Spleen (tissue), 13 donors: ENCODE measurements at regions of chr12 and their contacts with region 1.

Region 1: DNA sequence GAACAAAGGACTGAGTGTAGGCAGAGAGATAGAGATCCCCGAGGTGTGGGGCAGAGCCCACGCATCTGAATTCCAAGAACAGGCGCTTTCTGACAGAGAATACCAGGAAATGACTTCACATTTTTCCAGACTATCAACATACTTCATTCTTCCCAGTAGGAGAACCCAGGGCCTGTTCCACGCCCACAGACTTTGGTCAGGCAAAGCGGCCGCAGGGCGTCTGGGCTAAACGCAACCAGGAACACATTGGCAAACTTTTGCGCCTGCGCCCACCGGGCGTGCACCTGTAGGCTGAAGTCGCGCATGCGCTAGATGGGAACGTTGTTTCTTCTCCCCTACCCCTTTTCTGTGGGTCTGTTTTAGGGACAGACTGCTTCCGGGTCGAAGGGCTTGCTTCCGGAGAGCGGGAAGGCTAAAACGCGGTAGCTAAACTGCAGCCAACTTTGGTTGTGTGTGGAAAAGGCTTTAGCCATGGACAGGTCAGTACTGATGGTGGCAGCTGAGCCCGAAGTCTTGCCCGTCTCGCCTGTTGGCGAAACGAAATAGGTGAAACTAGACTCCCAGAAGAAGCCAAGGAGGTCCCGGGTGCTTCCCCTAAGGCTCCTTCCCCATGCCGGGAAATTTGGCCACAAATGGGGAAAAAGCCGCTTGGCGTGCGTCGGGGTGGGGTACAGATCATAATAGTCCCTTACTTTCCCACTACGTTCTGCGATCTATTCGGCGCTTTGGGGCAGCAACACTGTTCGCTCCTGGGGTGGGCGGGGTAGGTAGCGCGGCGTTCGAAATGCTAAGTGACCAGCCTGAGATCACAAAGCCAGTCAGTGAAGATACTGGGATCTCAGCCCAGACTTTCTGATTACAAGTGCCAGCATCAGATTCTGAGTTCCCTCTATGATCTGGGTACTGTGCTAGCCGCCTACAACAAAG is at the start of gene NUP107:
- DNase-seq: peak; percentile 99
- H3K4me3 ChIP-seq: peak within 1 kb of the TSS; percentile 78 to 100 (median 97)
- H3K27ac ChIP-seq: peak within 1 kb of the TSS; percentile 68 to 90 (median 86)
- H3K4me1 ChIP-seq: peaks cover 18 to 41% (median 27%) of the 10 kb centered on the region in 6 donors
- H3K27me3 ChIP-seq: no peaks in the 10 kb centered on the region
- CTCF ChIP-seq: peak in 6 of 11 experiments; percentile 15 to 42 (median 33)
- POLR2A ChIP-seq: peak in 1 of 3 donors; percentile 73
- total RNA-seq, gene NUP107: 41.1 to 61.4 (median 53.4) TPM

Region 2: GRCh38 chr12:68358532-68359485 is 328.0 kb before region 1 on chr12:
- intact Hi-C with region 1: loop called (anchors 10 kb)
- DNase-seq: no peak
- H3K4me3 ChIP-seq: peak overlapping the region in 1 of 8 donors; percentile 21
- H3K27ac ChIP-seq: peak overlapping the region; percentile 8 to 82 (median 66)
- H3K4me1 ChIP-seq: peaks cover 11 to 46% (median 22%) of the 10 kb centered on the region in 6 donors
- H3K27me3 ChIP-seq: no peaks in the 10 kb centered on the region
- CTCF ChIP-seq: peak; percentile 44 to 81 (median 74)
- POLR2A ChIP-seq: no peak

Region 3: DNA sequence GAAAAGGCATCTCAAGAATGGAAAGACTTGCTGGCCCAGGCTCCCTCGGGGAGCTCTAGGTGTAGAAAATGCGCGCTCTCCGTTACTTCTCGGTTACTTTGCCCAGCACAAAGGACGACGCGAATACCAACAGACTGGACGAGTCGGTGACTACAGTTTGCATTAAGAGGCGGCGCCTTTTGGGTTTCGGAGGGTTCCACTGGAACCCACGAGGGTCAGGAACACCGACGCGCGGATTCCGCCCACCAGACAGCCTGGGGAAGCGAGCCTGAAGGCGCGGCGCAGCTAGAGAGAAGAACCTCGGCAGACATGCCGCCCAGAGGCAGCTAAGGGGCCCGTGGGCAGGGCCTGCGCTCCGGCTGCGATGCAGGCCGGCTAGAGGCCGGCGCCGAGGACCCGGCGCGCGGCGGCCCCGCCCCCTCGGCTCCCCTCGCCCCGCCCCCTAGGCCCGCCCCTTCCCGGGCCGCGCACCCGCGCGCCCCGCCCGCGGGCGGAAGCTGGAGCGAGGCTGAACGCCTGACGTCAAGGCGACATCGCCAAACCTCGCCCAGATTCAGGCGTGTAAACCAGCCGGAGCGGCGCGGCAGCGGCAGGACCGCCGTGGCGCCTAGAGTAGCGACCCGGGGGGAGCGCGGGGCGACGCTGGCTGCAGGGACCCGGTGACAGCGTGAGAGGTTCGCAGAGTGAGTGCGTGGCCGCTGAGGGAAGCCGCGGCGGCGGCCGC is 76.3 kb before region 1 on chr12 and contains the start of gene RAP1B:
- intact Hi-C with region 1: loop called (anchors 5 kb)
- DNase-seq: peak; percentile 98
- H3K4me3 ChIP-seq: peak within 1 kb of the TSS; percentile 58 to 81 (median 68)
- H3K27ac ChIP-seq: peak within 1 kb of the TSS; percentile 94 to 99 (median 98)
- H3K4me1 ChIP-seq: peaks cover 26 to 60% (median 43%) of the 10 kb centered on the region in 6 donors
- H3K27me3 ChIP-seq: no peaks in the 10 kb centered on the region
- CTCF ChIP-seq: peak in 1 of 11 experiments; percentile 3
- POLR2A ChIP-seq: peak; percentile 85 to 97 (median 95)
- total RNA-seq, gene RAP1B: 178 to 321 (median 249) TPM